H1 (cell line): ENCODE measurements at regions of chr17 and their contacts with region 1.

Region 1: GRCh38 chr17:65154770-65155621 is 17.8 kb downstream of the RGS9 start:
- DNase-seq: no peak
- H3K4me3 ChIP-seq: no peak overlapping the region
- H3K27ac ChIP-seq: no peak overlapping the region
- H3K4me1 ChIP-seq: peaks cover 0 to 4% (median under 1%) of the 10 kb centered on the region in 4 experiments; a peak in 2 of 7 replicates
- H3K27me3 ChIP-seq: no peaks in the 10 kb centered on the region
- CTCF ChIP-seq: no peak
- EP300 ChIP-seq: no peak
- POLR2A ChIP-seq: no peak
- RAD21 ChIP-seq: no peak

Region 2: GRCh38 chr17:65137021-65137991 is 17.7 kb before region 1 on chr17 and contains the start of gene RGS9:
- CTCF ChIA-PET with region 1: interaction called, 11 read pairs
- POLR2A ChIA-PET with region 1: interaction called, 3 read pairs
- DNase-seq: peak; percentile 78 to 93
- H3K4me3 ChIP-seq: peak within 1 kb of the TSS; percentile 30 to 58 (median 38)
- H3K27ac ChIP-seq: no peak within 1 kb of the TSS
- H3K4me1 ChIP-seq: peaks cover 0 to 5% (median 2%) of the 10 kb centered on the region in 4 experiments; a peak in 4 of 7 replicates
- H3K27me3 ChIP-seq: peaks cover 0 to 14% (median 12%) of the 10 kb centered on the region in 4 experiments; a peak in 6 of 7 replicates
- CTCF ChIP-seq: peak; percentile 81 to 90 (median 83)
- EP300 ChIP-seq: peak in 1 of 2 experiments; percentile 85; a peak in 1 of 3 replicates
- POLR2A ChIP-seq: no peak
- RAD21 ChIP-seq: peak; percentile 60 to 76
- total RNA-seq, gene RGS9: 14.3 and 20.5 TPM in 2 replicates